AG04449 (cell line): ENCODE measurements at regions of chr9 and their contacts with region 1.

Region 1: GRCh38 chr9:114291064-114291474 is 31.8 kb upstream of the ORM1 start:
- DNase-seq: no peak
- H3K4me3 ChIP-seq: no peak overlapping the region
- CTCF ChIP-seq: peak; percentile 74

Region 2: GRCh38 chr9:113998525-113999255 is 292.4 kb before region 1 on chr9:
- CTCF ChIA-PET with region 1: no interaction called
- POLR2A ChIA-PET with region 1: no interaction called
- DNase-seq: no peak
- H3K4me3 ChIP-seq: no peak overlapping the region
- CTCF ChIP-seq: peak; percentile 64

Region 3: GRCh38 chr9:114098016-114098935 is 192.8 kb before region 1 on chr9:
- CTCF ChIA-PET with region 1: interaction called, 35 read pairs
- POLR2A ChIA-PET with region 1: no interaction called
- DNase-seq: no peak
- H3K4me3 ChIP-seq: peak overlapping the region; percentile 37
- CTCF ChIP-seq: no peak

Region 4: DNA sequence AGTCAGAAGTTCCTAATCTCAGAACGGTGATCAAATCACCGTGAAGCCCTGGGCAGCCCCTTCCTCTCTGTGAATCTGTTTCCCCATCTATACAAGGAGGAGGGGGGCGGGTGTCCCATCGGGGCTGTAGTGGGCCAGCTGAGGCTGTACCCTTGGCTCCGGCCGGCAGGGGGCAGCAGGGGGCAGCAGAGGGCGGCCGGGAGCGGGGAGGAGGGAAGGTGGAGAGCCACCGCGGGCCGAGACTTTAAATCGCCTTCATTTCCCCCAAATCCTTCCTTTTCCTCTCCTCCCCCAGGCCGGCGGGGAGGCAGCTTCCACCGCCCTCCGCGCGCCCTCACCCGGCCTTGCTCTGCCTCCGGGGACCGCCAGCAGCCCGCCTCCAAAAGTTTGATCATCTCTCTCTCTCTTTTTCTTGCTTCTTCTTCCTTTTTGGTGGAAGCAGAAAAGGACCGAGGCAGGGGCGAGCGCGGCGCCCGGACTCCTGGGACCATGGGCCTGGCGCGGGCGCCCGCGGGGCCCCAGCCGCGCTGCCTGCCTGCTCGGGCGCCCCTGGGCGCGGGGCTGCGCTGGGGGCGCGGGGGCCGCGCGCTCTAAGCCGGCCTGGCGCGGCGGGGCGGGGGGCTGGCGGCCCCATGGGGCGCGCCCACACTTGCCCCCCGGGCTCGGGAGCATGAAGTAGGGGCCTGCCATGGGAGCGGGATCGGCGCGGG is 135.7 kb before region 1 on chr9 and contains the start of gene COL27A1:
- CTCF ChIA-PET with region 1: interaction called, 280 read pairs
- POLR2A ChIA-PET with region 1: interaction called, 10 read pairs
- DNase-seq: no peak
- H3K4me3 ChIP-seq: peak within 1 kb of the TSS; percentile 73
- CTCF ChIP-seq: peak; percentile 98

Region 5: GRCh38 chr9:114196979-114197622 is 94.0 kb before region 1 on chr9:
- CTCF ChIA-PET with region 1: interaction called, 10 read pairs
- POLR2A ChIA-PET with region 1: no interaction called
- DNase-seq: no peak
- H3K4me3 ChIP-seq: no peak overlapping the region
- CTCF ChIP-seq: no peak

Region 6: GRCh38 chr9:114263853-114264510 is 27.1 kb before region 1 on chr9:
- CTCF ChIA-PET with region 1: interaction called, 13 read pairs
- POLR2A ChIA-PET with region 1: interaction called, 3 read pairs
- DNase-seq: no peak
- H3K4me3 ChIP-seq: no peak overlapping the region
- CTCF ChIP-seq: peak; percentile 41

Region 7: DNA sequence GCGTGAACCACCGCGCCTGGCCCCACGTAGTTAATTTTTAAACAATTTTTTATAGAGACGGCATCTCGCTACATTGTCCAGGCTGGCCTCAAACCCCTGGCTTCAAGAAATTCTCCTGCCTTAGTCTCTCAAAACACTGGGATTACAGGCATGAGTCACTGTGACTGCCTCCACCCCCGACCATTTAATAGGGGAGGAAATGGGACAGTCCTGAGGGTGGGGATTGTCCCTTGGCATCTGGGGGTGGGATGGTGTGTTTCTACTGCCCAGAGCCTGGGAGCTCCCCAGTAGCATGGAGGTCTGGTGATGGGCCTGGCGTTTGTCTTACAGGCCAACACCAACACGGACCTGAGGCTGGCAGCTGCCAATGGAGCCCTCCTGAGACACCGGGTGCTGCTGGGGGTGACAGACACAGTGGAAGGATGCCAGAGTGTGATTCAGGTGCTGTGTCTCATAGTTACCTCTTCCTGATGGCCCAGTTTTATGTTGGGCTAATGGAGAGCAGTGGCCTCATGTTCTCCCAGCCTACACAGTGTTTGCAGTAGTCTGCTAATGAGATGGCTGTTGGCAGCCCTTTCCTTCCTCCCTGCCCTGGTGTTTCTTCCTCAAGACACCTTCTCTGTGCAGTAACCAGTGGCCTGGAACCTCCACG is 342.5 kb after region 1 on chr9:
- CTCF ChIA-PET with region 1: no interaction called
- POLR2A ChIA-PET with region 1: no interaction called
- DNase-seq: no peak
- H3K4me3 ChIP-seq: no peak overlapping the region
- CTCF ChIP-seq: no peak